ENCODE measurements at regions of chr3 and their contacts with region 1.

Region 1: DNA sequence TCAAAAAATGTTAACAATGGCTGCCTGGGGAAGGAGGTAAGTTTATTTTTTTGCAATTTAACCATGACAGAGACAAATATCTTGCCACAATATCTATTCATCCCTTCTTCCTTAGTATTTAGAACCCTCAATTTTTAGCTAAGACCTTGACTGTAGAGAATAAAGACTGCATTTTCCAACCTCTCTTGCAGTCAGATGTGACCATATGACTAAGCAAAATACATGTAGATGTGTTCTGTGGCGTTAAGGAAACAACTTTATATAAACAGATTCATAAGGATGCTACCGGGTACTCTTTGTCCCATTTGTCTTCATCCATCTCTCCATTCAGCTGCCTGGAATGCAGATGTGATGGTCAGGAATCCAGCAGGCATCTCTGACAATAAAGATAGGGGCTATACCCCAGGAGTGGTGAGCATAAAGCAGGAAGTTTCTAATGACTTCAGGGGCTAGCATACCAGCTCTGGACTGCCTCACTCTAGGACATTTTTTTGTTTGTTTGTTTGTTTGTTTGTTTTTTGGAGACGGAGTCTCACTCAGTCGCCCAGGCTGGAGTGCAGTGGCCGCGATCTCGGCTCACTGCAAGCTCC is 41.1 kb downstream of the LHFPL4 start:
- DNase-seq: no peak
- ATAC-seq: no peak
- H3K4me3 ChIP-seq: no peak overlapping the region
- H3K4me3 Mint-ChIP-seq: no peak overlapping the region
- H3K27ac ChIP-seq: no peak overlapping the region
- H3K27ac Mint-ChIP-seq: no peak overlapping the region
- H3K4me1 ChIP-seq: no peaks in the 10 kb centered on the region
- H3K4me1 Mint-ChIP-seq: no peaks in the 10 kb centered on the region
- H3K27me3 ChIP-seq: peaks cover 12 to 16% of the 10 kb centered on the region in 2 experiments
- H3K27me3 Mint-ChIP-seq: peaks cover 31% of the 10 kb centered on the region
- CTCF ChIP-seq: no peak

Region 2: DNA sequence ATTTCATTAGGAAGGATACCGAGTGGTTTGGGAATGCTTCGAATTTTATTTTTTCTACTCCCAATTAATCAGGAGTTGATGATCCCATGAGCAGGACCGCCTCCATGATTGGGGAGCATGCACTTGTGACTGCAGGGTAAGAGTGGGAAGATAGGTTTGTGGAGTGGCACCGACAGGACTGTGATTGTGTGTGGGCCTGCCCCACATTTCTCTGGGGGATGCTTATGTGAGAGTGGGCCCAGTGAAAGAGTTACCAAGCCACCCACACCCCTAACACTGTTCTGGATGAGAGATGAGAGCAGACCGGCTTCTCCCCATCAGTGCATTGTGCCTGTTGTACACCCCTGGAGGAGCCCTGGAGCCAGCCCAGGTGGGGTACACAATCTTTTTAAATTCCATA is 35.6 kb before region 1 on chr3:
- CTCF ChIA-PET with region 1: no interaction called
- POLR2A ChIA-PET with region 1: no interaction called
- intact Hi-C with region 1: no loop called
- DNase-seq: no peak
- ATAC-seq: no peak
- H3K4me3 ChIP-seq: no peak overlapping the region
- H3K4me3 Mint-ChIP-seq: no peak overlapping the region
- H3K27ac ChIP-seq: no peak overlapping the region
- H3K27ac Mint-ChIP-seq: no peak overlapping the region
- H3K4me1 ChIP-seq: no peaks in the 10 kb centered on the region
- H3K4me1 Mint-ChIP-seq: no peaks in the 10 kb centered on the region
- H3K27me3 ChIP-seq: no peaks in the 10 kb centered on the region
- H3K27me3 Mint-ChIP-seq: no peaks in the 10 kb centered on the region
- CTCF ChIP-seq: no peak

Region 3: GRCh38 chr3:9552252-9552999 is 39.9 kb after region 1 on chr3:
- CTCF ChIA-PET with region 1: no interaction called
- POLR2A ChIA-PET with region 1: no interaction called
- intact Hi-C with region 1: no loop called
- DNase-seq: peak in 13 of 14 experiments; percentile 4 to 53 (median 13)
- ATAC-seq: no peak
- H3K4me3 ChIP-seq: no peak overlapping the region
- H3K4me3 Mint-ChIP-seq: no peak overlapping the region
- H3K27ac ChIP-seq: no peak overlapping the region
- H3K27ac Mint-ChIP-seq: no peak overlapping the region
- H3K4me1 ChIP-seq: peaks cover 7% of the 10 kb centered on the region
- H3K4me1 Mint-ChIP-seq: peaks cover 3% of the 10 kb centered on the region
- H3K27me3 ChIP-seq: peaks cover 30 to 43% of the 10 kb centered on the region in 2 experiments
- H3K27me3 Mint-ChIP-seq: peaks cover 79% of the 10 kb centered on the region
- CTCF ChIP-seq: no peak

Region 4: DNA sequence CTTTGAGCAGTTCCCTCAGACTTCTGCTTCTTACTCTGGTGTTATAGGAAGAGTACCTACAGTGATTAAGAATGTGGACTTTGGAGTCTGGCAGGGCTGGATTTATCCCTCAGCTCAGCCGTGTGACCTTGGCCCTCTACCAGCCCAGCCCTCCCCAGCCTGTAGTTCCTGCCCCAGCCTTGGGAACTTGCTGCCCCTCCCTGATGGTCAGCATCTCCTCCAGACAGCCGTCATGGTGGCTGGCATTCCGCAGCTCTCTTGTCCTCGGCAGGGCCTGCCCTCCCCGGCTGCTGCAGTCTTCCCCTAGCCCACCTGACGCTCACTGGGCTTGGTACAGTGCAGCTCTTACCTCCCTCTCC is 169.2 kb after region 1 on chr3:
- CTCF ChIA-PET with region 1: no interaction called
- POLR2A ChIA-PET with region 1: no interaction called
- intact Hi-C with region 1: no loop called
- DNase-seq: no peak
- ATAC-seq: no peak
- H3K4me3 ChIP-seq: no peak overlapping the region
- H3K4me3 Mint-ChIP-seq: no peak overlapping the region
- H3K27ac ChIP-seq: no peak overlapping the region
- H3K27ac Mint-ChIP-seq: no peak overlapping the region
- H3K4me1 ChIP-seq: no peaks in the 10 kb centered on the region
- H3K4me1 Mint-ChIP-seq: no peaks in the 10 kb centered on the region
- H3K27me3 ChIP-seq: no peaks in the 10 kb centered on the region
- H3K27me3 Mint-ChIP-seq: no peaks in the 10 kb centered on the region
- CTCF ChIP-seq: no peak

Region 5: GRCh38 chr3:9932843-9933560 is 420.5 kb after region 1 on chr3:
- CTCF ChIA-PET with region 1: no interaction called
- POLR2A ChIA-PET with region 1: no interaction called
- intact Hi-C with region 1: no loop called
- DNase-seq: peak; percentile 78 to 94 (median 85)
- ATAC-seq: peak; percentile 50
- H3K4me3 ChIP-seq: peak overlapping the region; percentile 65
- H3K4me3 Mint-ChIP-seq: peak overlapping the region; percentile 99
- H3K27ac ChIP-seq: peak overlapping the region; percentile 90 to 91
- H3K27ac Mint-ChIP-seq: peak overlapping the region; percentile 99
- H3K4me1 ChIP-seq: peaks cover 45% of the 10 kb centered on the region
- H3K4me1 Mint-ChIP-seq: peaks cover 65% of the 10 kb centered on the region
- H3K27me3 ChIP-seq: no peaks in the 10 kb centered on the region
- H3K27me3 Mint-ChIP-seq: no peaks in the 10 kb centered on the region
- CTCF ChIP-seq: peak; percentile 87

Region 6: GRCh38 chr3:10732292-10732691 is 1219.7 kb after region 1 on chr3:
- CTCF ChIA-PET with region 1: no interaction called
- POLR2A ChIA-PET with region 1: no interaction called
- intact Hi-C with region 1: loop called in 1 of 2 experiments (anchors 5 kb)
- DNase-seq: no peak
- ATAC-seq: no peak
- H3K4me3 ChIP-seq: no peak overlapping the region
- H3K4me3 Mint-ChIP-seq: no peak overlapping the region
- H3K27ac ChIP-seq: no peak overlapping the region
- H3K27ac Mint-ChIP-seq: no peak overlapping the region
- H3K4me1 ChIP-seq: no peaks in the 10 kb centered on the region
- H3K4me1 Mint-ChIP-seq: no peaks in the 10 kb centered on the region
- H3K27me3 ChIP-seq: peaks cover 16 to 23% of the 10 kb centered on the region in 2 experiments
- H3K27me3 Mint-ChIP-seq: peaks cover 50% of the 10 kb centered on the region
- CTCF ChIP-seq: no peak